Dorsolateral prefrontal cortex (tissue), 120 donors: ENCODE measurements at regions of chr3 and their contacts with region 1.

Region 1: GRCh38 chr3:32467333-32468070 is 35.1 kb downstream of the CMTM6 start:
- DNase-seq: peak in 8 of 10 donors; percentile 44 to 86 (median 58)
- H3K4me3 ChIP-seq: peak overlapping the region; percentile 26 to 80 (median 60)
- H3K27ac ChIP-seq: peak overlapping the region in 3 of 59 donors; percentile 3 to 44 (median 42)
- H3K27me3 ChIP-seq: no peaks in the 10 kb centered on the region
- CTCF ChIP-seq: peak; percentile 79 to 100 (median 97)

Region 2: DNA sequence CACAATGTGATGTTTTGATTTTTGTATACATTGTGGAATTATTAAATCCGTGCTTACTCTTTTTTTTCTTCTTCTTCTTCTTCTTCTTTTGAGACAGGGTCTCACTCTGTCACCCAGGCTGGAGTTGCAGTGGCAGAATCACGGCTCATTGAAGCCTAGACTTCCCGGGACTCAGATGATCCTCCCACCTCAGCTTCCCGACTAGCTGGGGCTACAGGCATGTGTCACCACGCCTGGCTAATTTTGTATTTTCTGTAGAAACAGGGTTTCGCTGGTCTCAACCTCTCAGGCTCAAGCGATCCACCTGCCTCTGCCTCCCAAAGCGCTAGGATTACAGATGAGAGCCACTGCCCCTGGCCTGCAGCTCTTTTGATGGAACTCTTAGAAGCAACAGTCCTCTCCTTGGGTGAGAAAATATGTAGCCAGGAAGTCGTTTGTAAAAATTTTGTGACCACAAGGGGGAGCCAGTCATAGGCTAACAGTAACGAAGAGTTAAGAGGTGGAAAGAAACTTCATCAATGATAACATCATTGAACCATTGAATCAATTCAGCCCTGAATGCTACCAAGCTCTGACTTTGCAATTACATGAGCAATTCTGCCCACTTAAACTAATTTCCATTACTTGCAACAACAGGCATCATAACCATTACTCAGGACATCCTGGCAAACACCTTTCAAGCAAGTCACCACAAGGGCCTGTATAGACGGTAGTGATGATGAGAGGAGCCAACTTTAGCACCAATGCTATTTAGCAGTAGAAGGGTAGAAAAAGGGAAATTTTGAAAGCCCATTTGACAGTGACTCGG is 92.5 kb before region 1 on chr3:
- intact Hi-C with region 1: loop called in 1 of 2 experiments (anchors 5 kb)
- DNase-seq: peak in 3 of 10 donors; percentile 28 to 67 (median 44)
- H3K4me3 ChIP-seq: no peak overlapping the region
- H3K27ac ChIP-seq: no peak overlapping the region
- H3K27me3 ChIP-seq: peaks cover 0 to 4% (median 0%) of the 10 kb centered on the region in 45 donors
- CTCF ChIP-seq: peak; percentile 56 to 81 (median 70)